K562 (cell line): ENCODE measurements at regions of chr14 and their contacts with region 1.

Region 1: DNA sequence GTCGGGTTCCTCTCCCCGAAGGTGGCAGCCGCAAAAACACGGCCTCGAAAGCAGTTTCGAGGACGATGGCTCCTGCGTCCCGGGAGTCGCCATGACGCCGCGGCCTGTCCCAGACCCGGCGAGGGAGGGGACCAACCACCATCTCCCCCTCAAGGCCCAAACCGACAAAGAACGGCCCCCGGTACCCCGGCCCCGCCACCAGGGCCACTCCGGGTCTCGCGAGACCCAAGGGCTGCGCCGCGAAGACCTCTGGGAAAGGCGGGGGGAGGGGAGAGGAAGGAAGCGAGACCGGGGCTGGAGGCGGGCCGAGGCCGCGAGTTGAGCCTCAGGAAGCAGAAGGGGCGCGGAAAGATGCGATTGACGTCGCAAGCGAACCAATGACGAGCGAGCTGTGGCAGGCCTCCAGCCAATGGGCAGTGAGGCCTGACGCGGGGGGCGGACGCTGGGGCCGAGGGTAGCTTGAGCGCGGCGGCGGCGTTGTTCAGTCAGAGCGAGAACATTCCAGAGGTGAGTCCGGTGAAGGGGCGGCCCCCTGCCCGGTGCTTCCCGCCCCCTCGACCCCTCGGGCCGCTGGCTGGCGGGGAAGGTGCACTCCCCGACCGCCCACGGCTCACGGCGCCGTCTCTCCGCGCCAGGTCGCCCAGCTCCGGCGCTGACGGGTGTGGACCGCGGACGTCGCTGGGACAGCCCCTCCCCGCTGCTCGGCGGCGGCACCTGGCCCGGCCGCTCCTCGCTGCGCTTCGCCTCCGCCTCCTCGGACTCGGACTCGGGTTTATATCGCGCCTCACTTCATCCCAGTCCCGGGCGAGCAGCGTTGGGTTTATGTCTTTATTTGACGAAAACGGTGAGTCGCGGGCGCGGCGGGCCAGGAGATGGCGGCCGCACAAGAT is at the start of gene EIF5:
- DNase-seq: peak; percentile 91 to 97 (median 95)
- ATAC-seq: peak; percentile 94
- H3K4me3 ChIP-seq: peak within 1 kb of the TSS; percentile 96
- H3K27ac ChIP-seq: peak within 1 kb of the TSS; percentile 98
- H3K4me1 ChIP-seq: peaks cover 21 to 38% of the 10 kb centered on the region in 2 experiments; a peak in 4 of 5 replicates
- H3K27me3 ChIP-seq: no peaks in the 10 kb centered on the region
- CTCF ChIP-seq: peak in 2 of 3 experiments; percentile 1 to 20; a peak in 1 of 6 replicates
- EP300 ChIP-seq: no peak
- POLR2A ChIP-seq: peak; percentile 98
- RAD21 ChIP-seq: peak in 1 of 2 experiments; percentile 24; a peak in 2 of 4 replicates
- polyA plus RNA-seq, gene EIF5: 92.7 to 126 TPM

Region 2: DNA sequence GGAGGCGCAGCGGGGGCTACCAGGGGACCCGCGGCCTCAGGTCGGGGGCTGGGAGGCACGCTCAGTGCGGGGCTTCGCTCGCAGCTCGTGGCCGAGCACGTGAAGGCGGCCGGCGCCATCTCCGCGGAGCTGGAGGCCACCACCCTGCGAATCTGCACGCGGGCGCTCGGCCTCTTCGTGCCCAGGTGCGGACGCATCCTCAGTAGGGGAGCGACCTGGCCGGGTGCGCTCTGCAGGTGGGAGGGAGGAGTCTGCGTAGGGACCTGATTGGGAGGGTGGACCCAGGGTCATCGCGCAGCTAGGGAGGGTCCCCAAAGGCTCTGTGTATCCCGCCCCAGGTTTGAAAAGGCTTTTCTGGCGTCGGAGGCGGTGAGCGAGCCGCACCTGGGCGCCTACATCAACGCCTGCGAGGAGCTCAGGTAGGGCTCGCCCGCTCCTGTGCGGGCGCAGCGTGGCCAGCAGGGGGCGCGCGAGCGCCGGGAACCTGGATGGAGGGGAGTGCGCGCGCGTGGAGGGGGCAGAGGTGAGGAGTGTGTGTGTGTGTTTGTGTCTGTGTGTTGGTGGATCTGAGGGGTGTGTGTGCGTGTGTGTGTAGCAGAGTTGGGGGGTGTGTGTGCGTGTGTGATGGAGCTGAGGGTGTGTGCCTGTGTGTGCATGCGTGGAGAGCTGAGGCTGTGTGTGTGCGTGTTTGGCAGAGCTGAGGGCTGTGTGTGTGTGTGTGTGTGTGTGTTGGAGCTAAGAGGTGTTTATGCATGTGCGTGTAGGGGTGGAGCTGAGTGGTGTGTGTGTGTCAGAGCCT is 229.1 kb before region 1 on chr14:
- CTCF ChIA-PET with region 1: no interaction called
- POLR2A ChIA-PET with region 1: interaction called, 11 read pairs
- in situ Hi-C with region 1: no loop called
- intact Hi-C with region 1: no loop called
- DNase-seq: peak; percentile 71 to 72 (median 71)
- ATAC-seq: peak; percentile 88
- H3K4me3 ChIP-seq: no peak overlapping the region
- H3K27ac ChIP-seq: no peak overlapping the region; the same call in 2 of the 3 replicates
- H3K4me1 ChIP-seq: peaks cover 31 to 87% of the 10 kb centered on the region in 2 experiments
- H3K27me3 ChIP-seq: no peaks in the 10 kb centered on the region
- CTCF ChIP-seq: peak; percentile 80 to 88 (median 85)
- EP300 ChIP-seq: no peak
- POLR2A ChIP-seq: 0 out of 2 replicates have a peak, but pooled peaks have one; percentile 35
- RAD21 ChIP-seq: peak; percentile 89 to 95

Region 3: DNA sequence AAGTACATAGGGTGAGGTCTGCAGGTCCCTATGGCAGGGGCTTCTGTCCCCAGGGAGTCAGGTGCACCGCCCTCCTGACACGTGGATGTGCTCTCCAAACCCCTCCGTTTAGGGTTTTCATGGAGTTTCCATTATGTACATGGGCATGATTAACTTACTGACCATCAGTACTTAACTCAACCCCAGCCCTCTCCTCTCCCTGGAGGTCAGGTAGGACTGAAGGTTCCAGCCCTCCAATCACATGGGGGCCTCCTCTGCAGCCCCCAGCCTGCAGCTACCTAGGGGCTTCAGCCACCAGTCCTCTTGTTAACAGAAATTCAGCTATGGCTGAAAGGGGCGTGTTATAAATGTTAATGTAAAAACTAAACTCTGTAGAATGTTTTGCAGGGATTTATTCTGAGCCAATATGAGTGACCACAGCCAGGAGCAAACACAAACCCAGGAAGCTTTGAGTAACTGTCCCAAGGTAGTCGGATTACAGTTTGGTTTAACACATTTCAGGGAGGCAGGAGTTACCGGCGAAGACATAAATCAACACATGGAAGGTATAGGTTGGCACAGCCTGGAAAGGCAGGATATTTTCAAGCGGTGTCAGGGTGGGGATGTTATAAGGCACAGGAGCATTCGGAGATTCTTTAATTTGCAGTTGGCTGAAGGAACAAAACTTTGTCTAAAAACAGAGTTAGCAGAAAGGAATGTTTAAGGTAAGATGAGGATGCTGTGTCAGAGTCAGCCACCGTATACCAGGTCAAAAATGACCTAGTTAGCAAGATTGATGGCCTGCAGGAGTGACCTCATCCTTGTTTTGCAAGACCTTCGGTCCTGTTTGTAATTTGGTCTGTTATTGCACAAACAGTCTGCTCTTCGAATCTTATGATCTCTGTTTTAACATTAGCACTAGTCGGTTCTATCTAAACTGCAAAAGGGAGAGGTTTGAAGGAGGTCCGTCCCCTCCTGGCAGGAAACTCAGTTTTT is 135.6 kb before region 1 on chr14:
- CTCF ChIA-PET with region 1: no interaction called
- POLR2A ChIA-PET with region 1: no interaction called
- in situ Hi-C with region 1: no loop called
- intact Hi-C with region 1: no loop called
- DNase-seq: no peak
- ATAC-seq: peak; percentile 51; the same call in 2 of the 3 replicates
- H3K4me3 ChIP-seq: no peak overlapping the region
- H3K27ac ChIP-seq: no peak overlapping the region
- H3K4me1 ChIP-seq: peaks cover 2 to 8% of the 10 kb centered on the region in 2 experiments; a peak in 3 of 5 replicates
- H3K27me3 ChIP-seq: no peaks in the 10 kb centered on the region
- CTCF ChIP-seq: no peak
- EP300 ChIP-seq: no peak
- POLR2A ChIP-seq: no peak
- RAD21 ChIP-seq: no peak

Region 4: GRCh38 chr14:103315351-103315911 is 18.6 kb before region 1 on chr14:
- CTCF ChIA-PET with region 1: no interaction called
- POLR2A ChIA-PET with region 1: interaction called, 12 read pairs
- in situ Hi-C with region 1: no loop called
- intact Hi-C with region 1: loop called (anchors 2 kb)
- DNase-seq: peak in 2 of 4 experiments; percentile 54 to 78
- ATAC-seq: peak; percentile 55
- H3K4me3 ChIP-seq: no peak overlapping the region
- H3K27ac ChIP-seq: peak overlapping the region; percentile 73
- H3K4me1 ChIP-seq: peaks cover 20 to 51% of the 10 kb centered on the region in 2 experiments
- H3K27me3 ChIP-seq: no peaks in the 10 kb centered on the region
- CTCF ChIP-seq: no peak
- EP300 ChIP-seq: peak; percentile 45; the same call in 1 of the 2 replicates
- POLR2A ChIP-seq: no peak
- RAD21 ChIP-seq: no peak

Region 5: DNA sequence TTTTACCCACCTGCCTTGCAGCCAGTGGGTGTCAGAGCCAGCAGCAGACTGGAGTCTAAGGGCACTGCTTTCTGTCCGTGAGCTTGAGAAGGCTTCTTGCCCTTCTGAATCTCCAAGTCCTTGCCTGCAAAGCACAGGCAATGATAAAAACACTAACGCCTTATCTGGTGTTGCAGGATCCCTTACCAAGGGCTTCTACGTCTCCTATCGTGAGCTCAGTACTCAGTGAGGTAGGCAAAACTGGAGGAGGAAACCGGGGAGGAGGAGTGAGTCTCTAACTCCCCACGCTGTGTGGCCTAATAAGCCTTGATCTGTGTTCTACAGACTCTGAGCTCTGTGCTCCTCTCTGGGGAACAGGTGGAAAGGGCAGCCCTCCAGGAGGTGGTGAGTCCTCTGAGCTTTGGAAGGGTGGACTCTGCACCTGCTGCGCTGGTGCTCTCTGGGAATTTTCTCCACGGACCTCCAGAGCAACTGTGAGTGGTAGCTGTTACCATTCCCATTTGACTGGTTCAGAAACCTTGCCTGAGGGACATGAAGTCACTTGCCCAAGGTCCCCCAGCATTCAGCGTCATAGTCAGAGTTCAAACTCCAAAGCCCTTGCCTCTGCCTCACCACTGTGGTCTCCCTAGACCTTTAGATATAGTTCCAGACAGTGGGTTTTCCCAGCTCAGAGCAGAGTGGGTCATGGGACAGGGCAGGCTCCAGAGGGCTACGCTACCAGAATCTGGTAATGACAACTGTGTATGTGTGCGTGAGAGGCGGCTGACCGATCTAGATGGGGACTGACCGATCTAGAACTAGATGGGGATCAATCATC is 44.2 kb after region 1 on chr14:
- CTCF ChIA-PET with region 1: no interaction called
- POLR2A ChIA-PET with region 1: interaction called, 15 read pairs
- in situ Hi-C with region 1: no loop called
- intact Hi-C with region 1: no loop called
- DNase-seq: peak; percentile 62 to 94 (median 77)
- ATAC-seq: peak; percentile 99
- H3K4me3 ChIP-seq: no peak overlapping the region
- H3K27ac ChIP-seq: peak overlapping the region; percentile 69
- H3K4me1 ChIP-seq: peaks cover 27% of the 10 kb centered on the region in 2 experiments; a peak in 4 of 5 replicates
- H3K27me3 ChIP-seq: no peaks in the 10 kb centered on the region
- CTCF ChIP-seq: no peak
- EP300 ChIP-seq: peak; percentile 92
- POLR2A ChIP-seq: no peak
- RAD21 ChIP-seq: peak; percentile 12; a peak in 1 of 4 replicates

Region 6: GRCh38 chr14:103391048-103391447 is 57.0 kb after region 1 on chr14:
- CTCF ChIA-PET with region 1: no interaction called
- POLR2A ChIA-PET with region 1: interaction called, 19 read pairs
- in situ Hi-C with region 1: no loop called
- intact Hi-C with region 1: loop called (anchors 5 kb)
- DNase-seq: peak in 2 of 4 experiments; percentile 19 to 47
- ATAC-seq: peak; percentile 24
- H3K4me3 ChIP-seq: no peak overlapping the region
- H3K27ac ChIP-seq: no peak overlapping the region
- H3K4me1 ChIP-seq: peaks cover 12 to 24% of the 10 kb centered on the region in 2 experiments
- H3K27me3 ChIP-seq: no peaks in the 10 kb centered on the region
- CTCF ChIP-seq: peak; percentile 75 to 92 (median 83)
- EP300 ChIP-seq: no peak
- POLR2A ChIP-seq: no peak
- RAD21 ChIP-seq: peak; percentile 45 to 62; a peak in 3 of 4 replicates

Region 7: GRCh38 chr14:103448097-103448496 is 114.1 kb after region 1 on chr14:
- CTCF ChIA-PET with region 1: no interaction called
- POLR2A ChIA-PET with region 1: no interaction called
- in situ Hi-C with region 1: no loop called
- intact Hi-C with region 1: no loop called
- DNase-seq: peak in 3 of 4 experiments; percentile 13 to 20 (median 18)
- ATAC-seq: peak; percentile 41; the same call in 2 of the 3 replicates
- H3K4me3 ChIP-seq: no peak overlapping the region
- H3K27ac ChIP-seq: no peak overlapping the region
- H3K4me1 ChIP-seq: peaks cover 16 to 32% of the 10 kb centered on the region in 2 experiments; a peak in 4 of 5 replicates
- H3K27me3 ChIP-seq: no peaks in the 10 kb centered on the region
- CTCF ChIP-seq: no peak
- EP300 ChIP-seq: no peak
- POLR2A ChIP-seq: no peak
- RAD21 ChIP-seq: no peak